Stomach (tissue), 19 donors: ENCODE measurements at regions of chr18 and their contacts with region 1.

Region 1: DNA sequence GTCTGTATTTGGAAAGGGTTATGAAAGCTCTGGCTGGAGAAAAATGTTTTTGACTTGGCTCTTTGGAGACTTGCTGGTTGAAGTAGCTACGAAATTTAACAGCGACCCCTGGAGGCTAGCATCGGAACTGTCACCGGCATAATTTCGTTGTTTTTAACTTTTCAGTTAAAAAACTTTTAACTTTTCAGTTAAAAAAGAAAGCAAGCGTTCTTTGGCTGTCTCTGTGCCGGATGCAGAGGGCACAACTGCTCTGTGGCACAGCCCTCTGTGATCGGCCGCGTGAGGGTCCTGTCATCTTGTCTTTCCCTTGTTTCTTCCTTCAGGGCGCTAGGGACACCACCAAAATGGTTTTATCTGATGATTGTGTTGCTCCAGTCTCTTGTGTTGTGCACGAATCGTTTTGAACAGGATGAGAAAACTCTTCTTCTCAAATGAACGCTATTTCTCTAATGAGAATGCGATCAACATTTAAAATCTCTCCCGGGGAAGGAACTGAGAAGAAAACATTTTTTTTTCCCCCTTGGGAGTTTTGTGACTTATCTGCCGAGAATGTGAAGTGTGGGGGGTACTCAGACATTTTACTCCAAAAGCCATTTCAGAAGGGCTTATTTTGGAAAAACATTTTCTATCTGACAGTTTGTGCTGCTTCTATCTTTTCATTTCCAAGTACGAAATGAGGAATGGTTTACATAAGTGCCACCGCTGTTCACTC is 57.1 kb downstream of the ADCYAP1 start:
- DNase-seq: peak in 1 of 2 donors; percentile 64
- H3K4me3 ChIP-seq: peak overlapping the region; percentile 19 to 27 (median 21)
- H3K27ac ChIP-seq: no peak overlapping the region
- H3K4me1 ChIP-seq: peaks cover 0 to 8% (median 0%) of the 10 kb centered on the region in 4 donors
- H3K27me3 ChIP-seq: peaks cover 0 to 16% (median 5%) of the 10 kb centered on the region in 3 donors
- CTCF ChIP-seq: peak in 5 of 7 experiments; percentile 37 to 93 (median 90)
- EP300 ChIP-seq: no peak
- POLR2A ChIP-seq: no peak

Region 2: DNA sequence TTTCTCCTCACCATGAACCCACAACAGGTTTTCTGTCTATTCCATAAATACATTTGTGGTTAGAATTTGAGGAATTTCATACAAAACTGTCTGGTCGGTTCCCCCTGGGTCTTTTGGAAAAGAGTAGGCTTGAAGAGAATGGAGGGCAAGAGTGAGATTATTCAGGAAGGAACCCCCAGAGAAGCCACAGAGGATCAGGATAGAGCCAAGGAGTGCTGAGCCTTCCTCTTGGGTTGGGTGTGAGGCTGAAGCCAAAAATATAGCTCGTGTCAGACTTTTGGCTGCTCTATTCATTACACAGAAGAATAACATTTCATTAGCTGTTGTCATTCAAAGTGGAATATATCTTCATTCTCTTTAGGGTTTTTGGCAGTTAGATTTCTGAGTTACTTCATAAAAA is 103.8 kb before region 1 on chr18:
- intact Hi-C with region 1: loop called (anchors 10 kb)
- DNase-seq: no peak
- H3K4me3 ChIP-seq: no peak overlapping the region
- H3K27ac ChIP-seq: no peak overlapping the region
- H3K4me1 ChIP-seq: no peaks in the 10 kb centered on the region
- H3K27me3 ChIP-seq: peaks cover 0 to 10% (median 0%) of the 10 kb centered on the region in 3 donors
- CTCF ChIP-seq: no peak
- EP300 ChIP-seq: no peak
- POLR2A ChIP-seq: no peak

Region 3: DNA sequence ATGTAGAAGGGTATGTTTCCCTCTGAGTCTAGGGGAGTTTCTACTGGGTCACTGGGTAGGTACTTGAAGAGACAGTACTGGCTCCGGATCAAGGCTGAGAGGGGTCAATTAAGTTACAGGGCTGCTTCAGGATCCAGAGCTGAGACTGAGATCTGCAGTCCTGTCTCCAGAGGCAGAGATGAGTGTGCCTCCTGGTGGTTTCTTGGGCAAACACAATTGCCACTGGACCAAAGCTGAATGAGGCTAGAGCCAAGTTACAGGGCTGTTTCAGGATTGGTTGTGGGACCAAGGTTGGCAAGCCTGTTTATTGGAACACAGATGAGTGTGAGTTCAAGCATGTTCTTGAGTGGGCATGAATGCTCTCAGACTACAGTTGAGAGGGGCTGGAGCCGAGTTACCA is 100.8 kb after region 1 on chr18:
- intact Hi-C with region 1: no loop called
- DNase-seq: no peak
- H3K4me3 ChIP-seq: no peak overlapping the region
- H3K27ac ChIP-seq: no peak overlapping the region
- H3K4me1 ChIP-seq: no peaks in the 10 kb centered on the region
- H3K27me3 ChIP-seq: no peaks in the 10 kb centered on the region
- CTCF ChIP-seq: no peak
- EP300 ChIP-seq: no peak
- POLR2A ChIP-seq: no peak